ENCODE measurements at regions of chr21 and their contacts with region 1.

Region 1: DNA sequence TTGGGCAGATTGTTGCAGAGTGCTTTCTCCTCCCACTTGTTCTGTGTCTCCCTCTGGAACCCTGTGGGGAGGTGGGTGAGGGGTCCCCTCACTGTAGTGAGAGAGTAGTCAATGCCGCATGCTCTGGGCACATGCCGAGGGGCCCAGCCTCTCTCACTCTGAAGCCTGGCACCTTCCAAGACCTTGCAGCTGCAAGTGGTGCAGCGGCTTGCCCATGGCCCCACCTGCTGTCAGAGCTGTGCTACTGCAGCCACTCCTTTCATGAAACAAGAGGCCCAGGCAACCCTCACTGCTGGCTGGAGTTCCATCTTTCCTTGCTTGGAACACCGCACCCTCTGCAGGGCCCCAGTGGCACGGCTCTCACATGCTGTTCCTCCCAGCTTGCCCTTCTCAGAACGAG is 58.4 kb upstream of the COL6A1 start:
- DNase-seq: peak; percentile 1
- H3K4me3 ChIP-seq: no peak overlapping the region
- CTCF ChIP-seq: peak; percentile 95

Region 2: DNA sequence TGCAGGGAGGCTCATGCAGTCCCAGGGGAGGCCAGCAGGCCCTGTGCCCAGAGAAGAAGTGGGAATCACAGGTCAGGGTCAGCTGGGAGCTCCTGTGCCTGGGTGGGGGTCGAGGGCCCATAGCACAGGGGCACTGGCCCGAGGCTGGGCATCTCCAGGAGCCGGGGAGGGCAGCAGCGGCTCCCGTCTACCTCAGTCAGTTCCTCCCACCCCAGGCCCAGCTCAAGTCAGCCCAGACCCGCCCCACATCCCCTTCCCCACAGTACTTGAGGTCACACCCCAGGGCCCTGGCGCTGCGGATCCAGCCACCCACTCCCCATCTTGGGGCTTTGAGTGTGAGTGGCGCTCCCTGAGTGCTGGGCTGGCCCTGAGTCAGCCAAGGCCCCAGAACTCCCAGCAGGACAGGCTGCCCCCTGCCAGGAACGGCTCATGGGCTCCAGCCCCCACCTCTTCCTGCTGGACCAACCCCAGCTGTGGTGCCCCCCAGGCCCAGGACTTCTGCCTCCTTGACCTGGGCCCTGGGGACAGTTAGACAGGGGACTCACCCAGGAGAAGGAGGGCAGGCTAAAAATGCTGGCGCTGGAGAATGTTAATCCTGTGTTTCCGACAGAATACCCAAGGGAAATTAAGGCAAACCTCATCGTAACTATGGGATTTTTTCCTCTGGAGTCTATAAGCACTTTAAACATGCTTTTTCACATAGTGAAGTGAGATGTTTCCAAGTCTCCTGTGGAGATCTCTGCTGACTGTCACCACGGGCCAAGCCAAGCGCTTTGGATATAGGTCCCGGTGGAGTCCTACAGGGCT is 10.3 kb before region 1 on chr21:
- CTCF ChIA-PET with region 1: interaction called, 10 read pairs
- POLR2A ChIA-PET with region 1: no interaction called
- DNase-seq: no peak
- H3K4me3 ChIP-seq: no peak overlapping the region
- CTCF ChIP-seq: no peak

Region 3: GRCh38 chr21:46150491-46151121 is 227.5 kb after region 1 on chr21:
- CTCF ChIA-PET with region 1: no interaction called
- POLR2A ChIA-PET with region 1: no interaction called
- DNase-seq: no peak
- H3K4me3 ChIP-seq: no peak overlapping the region
- CTCF ChIP-seq: no peak